Endothelial cell of umbilical vein (primary cell): ENCODE measurements at regions of chr12 and their contacts with region 1.

Region 1: DNA sequence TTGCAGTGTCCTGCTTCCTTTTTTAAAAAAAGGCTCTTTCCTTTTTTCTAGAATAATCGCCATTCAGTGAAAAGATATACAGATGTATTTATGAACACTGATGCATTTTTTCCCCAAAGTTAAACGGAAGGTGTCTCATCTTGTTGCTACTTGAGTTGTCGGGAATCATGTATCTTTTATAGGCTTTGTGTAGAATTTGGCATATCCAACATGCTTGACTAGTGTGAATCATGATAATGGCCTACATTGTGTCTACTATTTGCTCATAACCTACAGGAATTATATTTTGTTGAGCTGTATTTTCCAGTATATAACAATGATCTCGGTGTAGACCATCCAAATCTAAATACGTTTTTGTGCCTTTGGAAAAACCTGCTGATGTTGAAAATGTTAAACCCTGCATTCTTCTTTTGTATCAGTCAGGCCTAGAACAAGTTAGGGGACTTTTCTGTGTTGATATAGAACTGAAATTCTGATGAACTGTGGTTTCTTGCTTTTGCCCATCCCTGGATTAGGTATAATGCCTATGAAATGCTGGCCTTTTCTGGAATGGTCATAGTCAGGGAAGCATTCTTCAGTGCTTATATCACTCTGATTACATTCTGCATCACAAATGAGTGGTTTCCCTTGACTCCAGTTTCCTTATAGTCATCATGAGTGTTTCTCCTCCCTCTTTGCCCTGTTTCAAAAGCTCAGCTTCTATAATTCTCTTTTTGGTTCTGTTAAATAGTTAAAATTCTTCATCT is 10.8 kb downstream of the BMAL2 start:
- DNase-seq: peak; percentile 64
- H3K4me3 ChIP-seq: no peak overlapping the region
- H3K27ac ChIP-seq: peak overlapping the region; percentile 48
- H3K4me1 ChIP-seq: peaks cover 23% of the 10 kb centered on the region
- H3K27me3 ChIP-seq: no peaks in the 10 kb centered on the region
- CTCF ChIP-seq: no peak
- POLR2A ChIP-seq: no peak

Region 2: GRCh38 chr12:27367078-27367477 is 23.6 kb after region 1 on chr12:
- CTCF ChIA-PET with region 1: interaction called, 4 read pairs
- POLR2A ChIA-PET with region 1: no interaction called
- dilution Hi-C with region 1: no loop called
- intact Hi-C with region 1: loop called (anchors 2 kb)
- DNase-seq: no peak
- H3K4me3 ChIP-seq: no peak overlapping the region
- H3K27ac ChIP-seq: no peak overlapping the region
- H3K4me1 ChIP-seq: peaks cover 9% of the 10 kb centered on the region
- H3K27me3 ChIP-seq: no peaks in the 10 kb centered on the region
- CTCF ChIP-seq: no peak
- POLR2A ChIP-seq: no peak